ENCODE measurements at regions of chr20 and their contacts with region 1.

Region 1: GRCh38 chr20:59222253-59223181 is 58.9 kb downstream of the ZNF831 start:
- DNase-seq: peak; percentile 55
- H3K4me3 Mint-ChIP-seq: peak overlapping the region; percentile 66
- H3K27ac Mint-ChIP-seq: no peak overlapping the region
- H3K4me1 Mint-ChIP-seq: no peaks in the 10 kb centered on the region
- H3K27me3 Mint-ChIP-seq: peaks cover 96% of the 10 kb centered on the region
- CTCF ChIP-seq: peak; percentile 95

Region 2: DNA sequence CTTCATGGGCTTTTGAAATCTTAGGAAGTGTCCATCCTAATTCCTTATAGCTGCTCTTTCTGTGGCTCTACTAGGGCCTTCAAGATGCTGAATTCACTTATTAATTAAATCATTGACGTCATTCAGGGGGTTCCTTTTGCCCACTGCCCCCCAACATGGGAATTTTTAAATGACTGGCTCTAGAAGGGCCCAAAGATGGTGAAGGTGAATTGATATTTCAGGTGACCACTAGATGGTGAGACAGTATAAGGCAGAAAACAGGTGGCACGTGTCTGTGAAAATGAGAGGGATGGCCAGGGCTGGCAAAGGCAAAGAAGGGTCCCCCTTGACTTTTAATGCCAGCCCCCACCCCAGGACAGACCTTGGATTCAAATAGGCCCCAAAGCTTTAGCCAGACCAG is 358.2 kb before region 1 on chr20:
- CTCF ChIA-PET with region 1: interaction called, 44 read pairs
- POLR2A ChIA-PET with region 1: interaction called, 3 read pairs
- intact Hi-C with region 1: no loop called
- DNase-seq: peak; percentile 21
- H3K4me3 Mint-ChIP-seq: no peak overlapping the region
- H3K27ac Mint-ChIP-seq: no peak overlapping the region
- H3K4me1 Mint-ChIP-seq: no peaks in the 10 kb centered on the region
- H3K27me3 Mint-ChIP-seq: peaks cover 68% of the 10 kb centered on the region
- CTCF ChIP-seq: peak; percentile 9

Region 3: GRCh38 chr20:59055295-59055694 is 167.2 kb before region 1 on chr20:
- CTCF ChIA-PET with region 1: interaction called, 8 read pairs
- POLR2A ChIA-PET with region 1: no interaction called
- intact Hi-C with region 1: loop called (anchors 1 kb)
- DNase-seq: peak; percentile 39
- H3K4me3 Mint-ChIP-seq: no peak overlapping the region
- H3K27ac Mint-ChIP-seq: no peak overlapping the region
- H3K4me1 Mint-ChIP-seq: no peaks in the 10 kb centered on the region
- H3K27me3 Mint-ChIP-seq: peaks cover 32% of the 10 kb centered on the region
- CTCF ChIP-seq: peak; percentile 53

Region 4: GRCh38 chr20:59149651-59150504 is 72.6 kb before region 1 on chr20:
- CTCF ChIA-PET with region 1: no interaction called
- POLR2A ChIA-PET with region 1: no interaction called
- intact Hi-C with region 1: no loop called
- DNase-seq: no peak
- H3K4me3 Mint-ChIP-seq: no peak overlapping the region
- H3K27ac Mint-ChIP-seq: no peak overlapping the region
- H3K4me1 Mint-ChIP-seq: peaks cover 7% of the 10 kb centered on the region
- H3K27me3 Mint-ChIP-seq: peaks cover 63% of the 10 kb centered on the region
- CTCF ChIP-seq: no peak

Region 5: GRCh38 chr20:59207742-59208357 is 14.7 kb before region 1 on chr20:
- CTCF ChIA-PET with region 1: interaction called, 13 read pairs
- POLR2A ChIA-PET with region 1: no interaction called
- intact Hi-C with region 1: no loop called
- DNase-seq: peak; percentile 59
- H3K4me3 Mint-ChIP-seq: no peak overlapping the region
- H3K27ac Mint-ChIP-seq: no peak overlapping the region
- H3K4me1 Mint-ChIP-seq: no peaks in the 10 kb centered on the region
- H3K27me3 Mint-ChIP-seq: peaks cover 96% of the 10 kb centered on the region
- CTCF ChIP-seq: peak; percentile 52